Stomach (tissue), 19 donors: ENCODE measurements at regions of chr19 and their contacts with region 1.

Region 1: GRCh38 chr19:35716801-35717666 is 769 bp upstream of the KMT2B start:
- DNase-seq: peak; percentile 87 to 99
- H3K4me3 ChIP-seq: peak overlapping the region; percentile 93 to 98 (median 95)
- H3K27ac ChIP-seq: peak overlapping the region; percentile 84 to 95 (median 94)
- H3K4me1 ChIP-seq: peaks cover 25 to 54% (median 43%) of the 10 kb centered on the region in 4 donors
- H3K27me3 ChIP-seq: no peaks in the 10 kb centered on the region
- CTCF ChIP-seq: peak in 5 of 7 experiments; percentile 71 to 96 (median 85)
- EP300 ChIP-seq: no peak
- POLR2A ChIP-seq: no peak

Region 2: GRCh38 chr19:35545001-35545911 is 171.8 kb before region 1 on chr19 and contains the start of gene TMEM147:
- intact Hi-C with region 1: loop called (anchors 10 kb)
- DNase-seq: peak; percentile 94 to 97
- H3K4me3 ChIP-seq: peak within 1 kb of the TSS; percentile 82 to 89 (median 87)
- H3K27ac ChIP-seq: peak within 1 kb of the TSS; percentile 70 to 92 (median 87)
- H3K4me1 ChIP-seq: peaks cover 13 to 44% (median 32%) of the 10 kb centered on the region in 4 donors
- H3K27me3 ChIP-seq: no peaks in the 10 kb centered on the region
- CTCF ChIP-seq: no peak
- EP300 ChIP-seq: no peak
- POLR2A ChIP-seq: peak in 1 of 4 donors; percentile 2
- total RNA-seq, gene TMEM147: 7.0 to 121 (median 57.6) TPM